CD4-positive, alpha-beta T cell (primary cell): ENCODE measurements at regions of chr11 and their contacts with region 1.

Region 1: DNA sequence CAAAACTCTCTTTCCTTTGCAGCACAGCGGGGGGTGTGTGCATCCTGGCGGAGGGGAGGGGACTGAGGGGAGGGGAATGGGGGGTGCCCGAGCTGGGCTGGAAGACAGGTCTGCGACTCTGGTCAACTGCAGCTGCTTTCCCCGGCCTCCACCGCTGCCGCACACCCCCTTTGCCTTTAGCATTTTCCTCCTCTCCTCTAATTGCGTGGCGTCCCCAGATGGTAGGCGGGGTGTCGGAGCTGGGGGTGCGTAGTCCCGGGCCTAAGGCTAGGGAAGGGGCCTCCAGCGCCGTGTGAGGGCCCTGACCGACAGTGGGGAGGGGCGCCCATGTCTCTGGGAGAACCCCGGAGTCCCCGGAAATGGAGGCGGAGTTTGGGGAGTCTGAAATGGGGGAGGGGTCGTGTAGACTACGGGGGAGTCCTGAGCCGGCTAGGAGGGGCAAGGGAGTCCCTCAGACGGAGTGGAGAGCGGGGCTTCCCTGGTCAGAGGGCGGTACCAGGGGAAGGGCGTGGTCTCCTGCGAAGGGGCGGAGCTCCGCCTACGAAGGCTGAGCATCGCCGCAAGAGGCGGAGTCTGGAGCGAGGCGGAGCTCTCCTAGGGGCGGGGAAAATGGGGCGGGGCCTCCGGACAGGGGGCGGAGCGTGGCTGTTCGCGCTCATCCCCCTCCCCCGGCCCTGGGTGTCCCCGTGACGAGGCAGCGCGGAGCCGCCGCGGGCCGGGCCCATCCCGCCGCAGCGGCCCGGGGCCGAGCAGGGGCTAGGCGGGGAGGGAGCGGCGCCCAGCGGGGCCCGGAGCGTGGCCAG is at the start of gene PELI3:
- DNase-seq: peak; percentile 92 to 98 (median 95)
- ATAC-seq: peak; percentile 86
- H3K4me3 ChIP-seq: peak within 1 kb of the TSS; percentile 76
- H3K4me3 Mint-ChIP-seq: peak within 1 kb of the TSS; percentile 92
- H3K27ac ChIP-seq: peak within 1 kb of the TSS; percentile 84 to 90
- H3K27ac Mint-ChIP-seq: peak within 1 kb of the TSS; percentile 86
- H3K4me1 ChIP-seq: peaks cover 26% of the 10 kb centered on the region
- H3K4me1 Mint-ChIP-seq: peaks cover 27% of the 10 kb centered on the region
- H3K27me3 ChIP-seq: no peaks in the 10 kb centered on the region
- H3K27me3 Mint-ChIP-seq: no peaks in the 10 kb centered on the region
- CTCF ChIP-seq: no peak
- total RNA-seq, gene PELI3: 20.7 to 23.8 TPM

Region 2: GRCh38 chr11:66408488-66409214 is 57.8 kb before region 1 on chr11:
- CTCF ChIA-PET with region 1: no interaction called
- POLR2A ChIA-PET with region 1: interaction called, 3 read pairs
- intact Hi-C with region 1: loop called in 1 of 2 experiments (anchors 1 kb)
- DNase-seq: peak; percentile 84 to 97 (median 93)
- ATAC-seq: peak; percentile 88
- H3K4me3 ChIP-seq: peak overlapping the region; percentile 34
- H3K4me3 Mint-ChIP-seq: peak overlapping the region; percentile 84
- H3K27ac ChIP-seq: no peak overlapping the region
- H3K27ac Mint-ChIP-seq: no peak overlapping the region
- H3K4me1 ChIP-seq: peaks cover 14% of the 10 kb centered on the region
- H3K4me1 Mint-ChIP-seq: peaks cover 5% of the 10 kb centered on the region
- H3K27me3 ChIP-seq: peaks cover 2 to 19% of the 10 kb centered on the region in 2 experiments
- H3K27me3 Mint-ChIP-seq: peaks cover 50% of the 10 kb centered on the region
- CTCF ChIP-seq: peak; percentile 100

Region 3: DNA sequence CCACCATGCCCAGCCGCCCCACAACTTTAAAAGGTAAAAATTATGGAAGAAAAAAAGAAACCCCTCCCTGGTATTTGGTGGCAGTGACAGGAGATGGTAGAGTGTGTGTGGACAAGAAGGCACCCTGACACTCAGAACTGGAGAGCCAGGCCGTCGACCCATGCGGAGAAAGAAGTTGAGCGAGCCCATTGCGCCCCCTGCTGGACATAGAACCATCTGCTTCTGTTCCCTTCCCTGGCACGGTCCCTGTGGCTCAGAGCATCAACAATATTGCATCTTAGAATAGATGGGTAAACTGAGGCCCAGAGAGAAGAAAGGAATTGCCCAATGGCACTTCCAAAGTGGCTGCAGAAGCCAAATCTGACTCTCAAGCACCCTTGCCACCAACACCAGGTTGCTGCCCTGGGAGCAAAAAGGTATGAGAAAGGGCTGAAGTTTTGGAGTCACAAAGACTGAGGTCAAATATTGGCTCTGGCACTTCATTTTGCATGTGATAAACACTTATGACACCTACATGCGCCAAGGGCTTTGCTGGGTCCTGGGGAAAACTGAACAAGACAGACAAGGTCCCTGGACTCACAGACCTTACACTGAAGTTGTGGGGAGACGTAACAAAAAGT is 36.3 kb before region 1 on chr11:
- CTCF ChIA-PET with region 1: no interaction called
- POLR2A ChIA-PET with region 1: no interaction called
- intact Hi-C with region 1: no loop called
- DNase-seq: peak; percentile 56 to 87 (median 64)
- ATAC-seq: peak; percentile 68
- H3K4me3 ChIP-seq: no peak overlapping the region
- H3K4me3 Mint-ChIP-seq: no peak overlapping the region
- H3K27ac ChIP-seq: no peak overlapping the region
- H3K27ac Mint-ChIP-seq: no peak overlapping the region
- H3K4me1 ChIP-seq: no peaks in the 10 kb centered on the region
- H3K4me1 Mint-ChIP-seq: peaks cover 5% of the 10 kb centered on the region
- H3K27me3 ChIP-seq: no peaks in the 10 kb centered on the region
- H3K27me3 Mint-ChIP-seq: peaks cover 4% of the 10 kb centered on the region
- CTCF ChIP-seq: peak; percentile 81

Region 4: DNA sequence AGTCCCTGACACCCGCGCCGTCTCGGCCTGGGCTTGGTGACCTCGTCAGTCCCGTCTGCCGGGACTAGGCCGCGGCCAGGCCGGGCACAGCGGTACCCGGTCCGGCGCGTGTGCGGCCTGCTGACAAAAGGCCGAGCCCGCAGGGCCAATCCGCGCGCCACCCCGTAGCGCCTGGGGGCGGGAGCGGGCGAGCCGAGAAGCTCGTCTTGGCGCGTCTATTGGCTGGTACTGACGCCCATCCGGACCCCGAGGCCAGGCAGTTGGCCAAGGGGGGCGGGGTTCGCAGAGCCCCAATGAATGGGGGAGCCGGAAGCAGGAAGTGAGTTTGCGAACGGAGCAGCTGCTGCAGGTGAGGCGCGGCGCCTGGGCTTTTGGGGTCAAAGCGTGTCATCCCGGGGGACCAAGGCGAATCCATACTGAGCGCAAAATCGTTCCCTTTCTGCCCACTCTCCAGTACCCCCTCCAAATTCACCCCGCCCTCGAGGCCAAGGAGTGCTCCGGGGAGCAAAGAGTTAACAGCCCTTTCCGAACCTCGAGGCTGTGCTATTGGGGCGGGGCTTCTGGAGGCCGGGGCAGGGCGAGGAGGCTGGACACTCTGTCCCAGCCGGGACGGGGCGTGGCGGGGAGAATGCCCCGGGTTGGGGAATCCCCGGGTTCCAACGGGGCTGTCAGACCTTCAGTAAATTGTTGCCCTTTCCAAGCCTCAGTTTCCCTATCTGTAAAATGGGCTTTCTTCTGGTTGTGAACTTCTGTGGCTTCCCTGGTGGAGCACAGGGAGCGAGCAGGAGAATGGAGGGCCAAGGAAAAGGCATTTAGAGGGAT is 13.9 kb after region 1 on chr11 and contains the start of gene DPP3:
- CTCF ChIA-PET with region 1: interaction called, 12 read pairs
- POLR2A ChIA-PET with region 1: interaction called, 88 read pairs
- intact Hi-C with region 1: loop called in 1 of 2 experiments (anchors 1 kb)
- DNase-seq: peak; percentile 91 to 97 (median 95)
- ATAC-seq: peak; percentile 98
- H3K4me3 ChIP-seq: peak within 1 kb of the TSS; percentile 79
- H3K4me3 Mint-ChIP-seq: peak within 1 kb of the TSS; percentile 91
- H3K27ac ChIP-seq: peak within 1 kb of the TSS; percentile 70 to 79
- H3K27ac Mint-ChIP-seq: peak within 1 kb of the TSS; percentile 83
- H3K4me1 ChIP-seq: peaks cover 29% of the 10 kb centered on the region
- H3K4me1 Mint-ChIP-seq: peaks cover 24% of the 10 kb centered on the region
- H3K27me3 ChIP-seq: no peaks in the 10 kb centered on the region
- H3K27me3 Mint-ChIP-seq: no peaks in the 10 kb centered on the region
- CTCF ChIP-seq: no peak
- total RNA-seq, gene DPP3: 16.9 to 17.7 TPM

Region 5: GRCh38 chr11:66491315-66491935 is 25.0 kb after region 1 on chr11:
- CTCF ChIA-PET with region 1: no interaction called
- POLR2A ChIA-PET with region 1: no interaction called
- intact Hi-C with region 1: no loop called
- DNase-seq: peak in 1 of 14 experiments; percentile 9
- ATAC-seq: no peak
- H3K4me3 ChIP-seq: no peak overlapping the region
- H3K4me3 Mint-ChIP-seq: no peak overlapping the region
- H3K27ac ChIP-seq: no peak overlapping the region
- H3K27ac Mint-ChIP-seq: no peak overlapping the region
- H3K4me1 ChIP-seq: no peaks in the 10 kb centered on the region
- H3K4me1 Mint-ChIP-seq: no peaks in the 10 kb centered on the region
- H3K27me3 ChIP-seq: no peaks in the 10 kb centered on the region
- H3K27me3 Mint-ChIP-seq: no peaks in the 10 kb centered on the region
- CTCF ChIP-seq: no peak

Region 6: DNA sequence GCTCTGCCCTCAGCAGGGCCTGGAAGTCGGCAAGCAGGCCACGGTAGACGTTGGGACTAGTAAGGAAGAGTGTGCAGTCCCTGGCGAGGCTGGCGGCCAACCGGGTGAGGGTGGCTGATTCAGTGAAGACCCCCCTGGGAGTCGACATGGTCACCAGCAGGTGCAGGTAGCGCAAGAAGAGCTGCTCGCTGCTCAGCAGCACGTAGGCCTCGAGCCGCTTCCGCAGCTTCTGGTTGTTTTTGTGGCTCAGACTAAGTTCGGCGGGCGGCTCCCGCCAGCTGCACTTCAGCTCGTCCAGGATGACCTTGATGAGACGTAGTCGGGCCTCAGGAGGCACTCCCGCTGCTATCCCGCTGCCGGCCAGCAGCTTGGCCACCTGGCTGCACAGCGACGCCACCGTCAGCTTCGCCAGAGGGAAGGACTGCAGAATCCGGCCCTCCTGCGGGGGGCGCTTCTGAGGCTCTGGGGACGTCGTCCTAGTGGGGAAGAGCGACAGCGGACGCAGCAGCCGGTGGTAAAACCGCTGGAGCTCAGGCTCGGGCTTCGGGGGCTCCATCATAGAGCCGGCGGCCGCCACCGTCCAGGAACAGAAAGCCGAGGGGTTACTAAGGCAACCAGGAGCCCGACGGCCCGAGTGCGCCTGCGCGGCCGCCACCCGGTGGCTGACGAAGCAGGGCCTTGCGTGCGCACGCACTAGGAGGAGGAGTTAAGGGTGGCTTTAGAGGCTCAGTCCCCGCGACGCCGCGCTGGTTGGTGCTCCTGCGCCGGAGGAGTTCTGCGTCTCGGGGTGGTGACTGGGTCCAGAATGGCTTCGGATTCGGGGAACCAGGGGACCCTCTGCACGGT is 126.3 kb after region 1 on chr11 and contains the starts of genes CCDC87 and CCS:
- CTCF ChIA-PET with region 1: no interaction called
- POLR2A ChIA-PET with region 1: no interaction called
- intact Hi-C with region 1: loop called in 1 of 2 experiments (anchors 5 kb)
- DNase-seq: peak; percentile 98 to 100 (median 99)
- ATAC-seq: peak; percentile 99
- H3K4me3 ChIP-seq: peak within 1 kb of the TSS; percentile 79
- H3K4me3 Mint-ChIP-seq: peak within 1 kb of the TSS; percentile 98
- H3K27ac ChIP-seq: peak within 1 kb of the TSS; percentile 58 to 81
- H3K27ac Mint-ChIP-seq: peak within 1 kb of the TSS; percentile 85
- H3K4me1 ChIP-seq: peaks cover 39% of the 10 kb centered on the region
- H3K4me1 Mint-ChIP-seq: peaks cover 23% of the 10 kb centered on the region
- H3K27me3 ChIP-seq: no peaks in the 10 kb centered on the region
- H3K27me3 Mint-ChIP-seq: no peaks in the 10 kb centered on the region
- CTCF ChIP-seq: peak; percentile 55
- total RNA-seq, gene CCDC87: 0.22 to 0.25 TPM
- total RNA-seq, gene CCS: 25.4 to 26.3 TPM

Region 7: DNA sequence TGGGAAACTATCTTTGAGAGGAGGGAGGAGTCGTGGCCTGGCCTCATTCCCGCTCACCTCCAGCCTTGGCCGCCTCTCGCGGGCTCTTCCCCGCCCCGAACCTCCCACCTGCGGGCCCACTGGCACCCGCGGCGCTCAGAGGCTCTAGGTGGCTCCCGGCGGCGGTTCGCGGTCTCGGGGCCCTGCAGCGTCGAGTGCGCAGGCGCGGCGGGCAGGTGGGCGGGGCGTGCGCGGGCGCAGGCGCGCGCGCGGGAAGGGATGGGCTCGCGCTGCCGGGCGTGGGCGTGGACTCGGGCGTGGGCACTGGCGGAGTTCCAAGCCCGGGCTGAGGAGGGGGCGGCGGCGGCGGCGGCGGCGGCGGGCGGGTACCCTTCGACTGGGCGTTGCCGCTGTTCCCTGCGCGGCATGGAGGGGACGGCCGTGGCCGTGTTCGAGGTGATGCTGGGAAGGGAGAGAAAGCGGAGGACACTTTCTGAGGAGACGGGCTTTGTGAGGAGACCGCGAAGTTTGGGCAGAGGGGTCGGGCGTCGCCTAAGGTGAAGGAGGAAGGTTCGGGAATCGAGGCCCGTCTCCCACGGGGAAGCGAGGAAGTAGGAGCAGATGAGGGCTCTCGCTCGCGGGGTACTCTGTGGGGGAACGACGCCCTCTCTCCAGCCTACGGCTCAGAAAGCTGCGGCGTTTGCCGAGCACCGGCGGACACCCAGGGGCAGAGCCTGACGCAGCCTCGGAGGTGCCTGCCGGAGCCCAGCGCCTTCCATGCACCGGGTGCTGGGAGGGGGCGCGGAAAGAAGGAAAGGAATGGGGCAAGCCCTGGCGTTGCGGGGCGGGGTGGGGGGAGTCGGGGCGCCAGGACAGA is 278.3 kb after region 1 on chr11:
- CTCF ChIA-PET with region 1: no interaction called
- POLR2A ChIA-PET with region 1: no interaction called
- intact Hi-C with region 1: loop called in 1 of 2 experiments (anchors 2 kb)
- DNase-seq: peak; percentile 79 to 96 (median 87)
- ATAC-seq: peak; percentile 87
- H3K4me3 ChIP-seq: peak overlapping the region; percentile 90
- H3K4me3 Mint-ChIP-seq: peak overlapping the region; percentile 91
- H3K27ac ChIP-seq: peak overlapping the region; percentile 60 to 61
- H3K27ac Mint-ChIP-seq: peak overlapping the region; percentile 78
- H3K4me1 ChIP-seq: peaks cover 21% of the 10 kb centered on the region
- H3K4me1 Mint-ChIP-seq: peaks cover 13% of the 10 kb centered on the region
- H3K27me3 ChIP-seq: no peaks in the 10 kb centered on the region
- H3K27me3 Mint-ChIP-seq: no peaks in the 10 kb centered on the region
- CTCF ChIP-seq: no peak